ENCODE measurements at regions of chr13 and their contacts with region 1.

Region 1: GRCh38 chr13:99033814-99034213 is 56.0 kb upstream of the DOCK9 start:
- DNase-seq: no peak

Region 2: DNA sequence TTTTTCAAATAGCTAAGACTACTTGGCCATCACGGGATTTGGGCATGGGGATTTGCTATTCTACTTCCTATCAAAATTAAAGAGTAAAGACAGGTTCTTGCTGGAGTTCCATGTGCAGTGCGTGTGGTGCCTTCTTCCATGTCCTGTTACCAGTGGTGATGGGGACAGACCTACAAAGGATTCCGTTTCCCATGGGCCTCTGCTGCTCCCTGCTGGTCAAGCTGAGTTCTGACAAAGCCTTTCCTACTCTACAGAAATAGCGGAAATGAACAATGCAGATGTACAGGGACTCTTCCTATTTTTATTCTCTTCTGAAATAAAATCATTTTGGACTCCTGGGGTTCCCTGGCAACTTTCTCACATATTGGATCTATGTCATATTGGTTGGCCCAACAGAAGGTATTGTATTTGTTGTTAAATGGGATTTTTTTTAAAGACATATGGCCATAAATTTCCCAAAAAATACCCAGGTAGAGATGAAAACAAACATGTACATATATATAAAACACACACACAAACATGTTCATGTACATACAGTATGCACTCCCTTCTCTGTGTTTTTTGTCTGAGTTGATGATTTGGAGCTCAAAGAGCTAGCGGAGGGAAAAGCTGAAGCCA is 190.8 kb before region 1 on chr13:
- intact Hi-C with region 1: loop called in 1 of 2 experiments (anchors 5 kb)
- DNase-seq: no peak

Region 3: GRCh38 chr13:99053636-99054233 is 19.9 kb after region 1 on chr13:
- intact Hi-C with region 1: no loop called
- DNase-seq: no peak

Region 4: DNA sequence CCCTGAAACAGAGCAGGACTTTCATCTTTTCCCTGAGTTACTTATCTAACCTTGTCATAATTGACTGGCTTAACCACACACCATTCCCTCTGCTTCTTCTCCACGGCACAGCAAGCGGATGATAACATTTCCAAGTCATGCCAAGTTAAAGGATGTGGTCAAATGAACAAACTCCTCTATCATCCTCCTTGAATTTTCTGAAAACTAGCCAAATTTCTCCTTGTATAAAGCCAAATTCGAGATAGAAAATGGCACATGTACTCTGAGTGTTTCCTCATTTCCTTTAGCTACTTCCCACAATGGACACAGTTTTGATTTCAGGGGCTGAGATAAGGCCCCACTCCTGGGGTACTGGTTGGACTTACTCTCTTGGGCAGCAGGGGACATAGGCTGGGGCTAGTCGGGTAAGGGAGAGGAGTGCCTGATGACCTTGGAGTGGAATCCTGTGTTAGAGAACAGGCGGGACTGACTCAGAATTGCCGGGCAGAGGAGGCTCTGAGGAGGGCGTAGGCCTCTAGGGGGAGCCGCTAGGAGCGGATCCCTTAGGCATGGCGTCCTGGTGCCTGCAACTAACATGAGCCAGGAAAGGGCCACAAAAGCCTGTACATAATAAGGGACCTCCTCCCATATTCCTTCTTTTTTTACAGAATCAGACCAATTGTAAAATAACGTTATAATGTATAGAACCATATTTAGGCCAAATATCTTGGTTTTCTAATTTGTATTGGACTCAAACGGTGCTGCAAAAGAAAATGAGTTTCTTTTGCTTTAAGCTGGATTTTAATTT is 1661.1 kb after region 1 on chr13:
- intact Hi-C with region 1: no loop called
- DNase-seq: no peak